Activated naive CD4-positive, alpha-beta T cell treated with anti-CD3 and anti-CD28 coated beads for 36 hours (primary cell): ENCODE measurements at regions of chr6 and their contacts with region 1.

Region 1: DNA sequence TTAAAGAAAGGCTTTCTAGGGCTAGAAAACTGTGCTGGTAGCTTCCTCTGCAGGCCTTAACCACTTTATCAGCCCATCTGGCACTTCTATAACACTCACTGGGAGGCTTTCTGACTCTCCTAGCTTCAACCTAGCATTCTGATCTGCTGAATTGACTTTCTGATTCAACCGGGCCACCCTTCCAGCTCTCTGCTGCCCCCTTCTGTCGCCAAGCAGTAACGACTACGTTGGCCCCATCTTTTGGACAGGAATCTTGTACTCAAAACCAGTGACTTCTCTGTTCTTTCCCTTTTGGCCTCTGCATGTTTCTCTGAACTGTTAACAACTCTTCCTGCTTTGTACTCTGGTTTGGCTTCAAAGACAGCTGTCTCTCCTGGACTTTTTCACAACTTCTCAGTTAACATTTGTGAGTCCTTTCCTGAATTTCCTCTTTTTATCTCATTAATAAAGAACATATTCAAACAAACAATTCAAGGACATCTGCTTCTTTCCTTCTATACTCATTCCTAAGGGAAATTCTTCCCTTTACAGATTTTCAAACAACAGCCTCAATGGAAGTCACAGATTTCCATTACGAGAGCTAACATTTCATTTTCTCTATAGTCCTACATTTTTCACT is 43.9 kb upstream of the FAM135A start:
- DNase-seq: peak; percentile 76
- H3K4me3 Mint-ChIP-seq: no peak overlapping the region
- H3K27ac Mint-ChIP-seq: no peak overlapping the region
- H3K4me1 Mint-ChIP-seq: no peaks in the 10 kb centered on the region
- H3K27me3 Mint-ChIP-seq: peaks cover 9% of the 10 kb centered on the region

Region 2: GRCh38 chr6:70221025-70221714 is 148.3 kb before region 1 on chr6:
- CTCF ChIA-PET with region 1: interaction called, 95 read pairs
- intact Hi-C with region 1: loop called (anchors 1 kb)
- DNase-seq: no peak
- H3K4me3 Mint-ChIP-seq: no peak overlapping the region
- H3K27ac Mint-ChIP-seq: no peak overlapping the region
- H3K4me1 Mint-ChIP-seq: no peaks in the 10 kb centered on the region
- H3K27me3 Mint-ChIP-seq: peaks cover 13% of the 10 kb centered on the region

Region 3: DNA sequence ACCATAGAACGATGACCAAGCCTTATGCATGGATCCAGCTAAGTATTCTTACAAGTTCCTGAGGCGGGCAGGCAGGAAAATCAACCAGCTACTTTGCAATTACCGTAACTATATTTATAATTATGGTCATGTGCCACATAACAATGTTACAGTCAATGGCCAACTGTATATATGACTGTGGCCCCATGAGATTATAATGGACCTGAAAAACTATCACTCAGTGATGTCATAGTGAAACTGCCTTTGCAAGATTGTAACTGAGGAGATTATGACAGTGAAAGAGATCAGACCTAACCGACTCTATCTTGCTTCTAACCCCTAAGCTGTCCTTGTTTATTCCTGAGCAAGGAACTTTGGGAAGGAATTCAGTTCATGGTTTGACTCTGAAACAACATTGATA is 10.8 kb after region 1 on chr6:
- CTCF ChIA-PET with region 1: interaction called, 20 read pairs
- intact Hi-C with region 1: no loop called
- DNase-seq: no peak
- H3K4me3 Mint-ChIP-seq: no peak overlapping the region
- H3K27ac Mint-ChIP-seq: no peak overlapping the region
- H3K4me1 Mint-ChIP-seq: no peaks in the 10 kb centered on the region
- H3K27me3 Mint-ChIP-seq: peaks cover 12% of the 10 kb centered on the region

Region 4: DNA sequence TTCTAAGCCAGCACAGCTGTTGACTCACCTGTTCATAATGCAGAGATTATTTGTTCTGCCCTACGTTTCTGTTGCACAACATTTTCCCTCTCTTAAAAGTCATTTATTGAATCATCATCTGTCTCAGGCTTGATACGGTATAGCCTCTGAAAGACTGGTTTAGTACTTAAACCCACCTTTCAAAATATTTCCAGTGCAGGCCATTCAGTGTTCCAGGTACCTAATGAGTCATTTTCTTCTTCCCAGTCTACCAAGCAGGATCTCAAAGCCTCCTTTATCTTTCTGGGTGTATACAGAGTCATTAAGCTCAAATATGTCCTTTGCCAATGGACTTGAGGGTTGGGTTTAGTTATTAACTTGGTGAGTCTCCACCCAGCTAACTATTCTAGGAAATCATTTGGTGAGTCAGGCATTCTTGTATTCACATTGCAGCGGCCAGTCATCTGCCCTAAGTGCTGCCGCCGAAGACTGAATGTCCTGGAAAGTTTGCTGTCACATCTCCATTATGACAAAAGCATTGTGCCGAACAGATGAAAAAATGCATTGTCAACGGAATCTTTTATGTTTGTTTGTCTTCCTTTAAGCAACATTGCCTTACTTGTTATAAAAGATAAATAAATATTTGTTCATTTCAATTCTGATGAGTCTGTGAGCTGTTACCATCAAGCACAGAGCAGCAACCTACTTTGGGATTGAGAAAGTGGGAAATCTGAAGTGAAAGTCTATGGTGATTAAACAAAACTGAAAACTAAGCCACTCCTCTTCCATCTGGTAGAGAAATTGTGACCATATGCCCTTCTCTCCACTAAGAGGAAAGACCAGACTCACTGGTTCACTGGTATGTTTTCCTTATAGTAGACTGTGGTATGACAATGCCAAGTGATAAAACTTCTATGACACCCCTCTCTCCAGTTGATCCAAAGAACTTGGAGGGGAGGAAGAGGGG is 29.6 kb after region 1 on chr6:
- CTCF ChIA-PET with region 1: no interaction called
- intact Hi-C with region 1: no loop called
- DNase-seq: no peak
- H3K4me3 Mint-ChIP-seq: no peak overlapping the region
- H3K27ac Mint-ChIP-seq: no peak overlapping the region
- H3K4me1 Mint-ChIP-seq: no peaks in the 10 kb centered on the region
- H3K27me3 Mint-ChIP-seq: peaks cover 16% of the 10 kb centered on the region

Region 5: DNA sequence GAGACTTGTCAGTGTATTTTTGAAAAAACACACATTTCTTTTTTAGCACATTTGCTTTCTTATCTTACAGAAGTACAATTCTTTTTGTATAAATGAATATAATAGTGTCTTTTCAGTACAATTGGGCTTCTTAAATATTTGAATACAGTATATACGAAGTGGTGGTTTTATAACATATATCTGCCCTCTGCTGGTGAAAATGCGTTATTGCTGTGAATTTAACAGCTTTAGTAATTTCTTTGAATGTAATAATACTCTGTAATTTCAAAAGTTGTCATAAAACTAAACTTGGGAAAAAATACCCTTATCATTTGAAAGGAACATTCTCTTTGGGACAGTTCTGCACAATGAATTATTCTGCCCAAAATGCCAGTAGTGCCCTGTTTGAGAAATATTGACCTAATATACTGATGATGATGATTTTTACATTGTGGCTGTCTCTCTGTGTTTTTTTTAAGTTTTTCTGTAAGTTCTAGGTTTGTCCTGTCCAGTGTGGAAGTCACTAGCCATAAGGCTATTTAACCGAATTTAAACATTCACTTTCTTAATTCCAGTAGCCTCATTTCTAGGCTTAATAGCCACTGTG is 317.2 kb after region 1 on chr6:
- CTCF ChIA-PET with region 1: interaction called, 12 read pairs
- intact Hi-C with region 1: loop called (anchors 1 kb)
- DNase-seq: no peak
- H3K4me3 Mint-ChIP-seq: no peak overlapping the region
- H3K27ac Mint-ChIP-seq: no peak overlapping the region
- H3K4me1 Mint-ChIP-seq: peaks cover 44% of the 10 kb centered on the region
- H3K27me3 Mint-ChIP-seq: no peaks in the 10 kb centered on the region

Region 6: DNA sequence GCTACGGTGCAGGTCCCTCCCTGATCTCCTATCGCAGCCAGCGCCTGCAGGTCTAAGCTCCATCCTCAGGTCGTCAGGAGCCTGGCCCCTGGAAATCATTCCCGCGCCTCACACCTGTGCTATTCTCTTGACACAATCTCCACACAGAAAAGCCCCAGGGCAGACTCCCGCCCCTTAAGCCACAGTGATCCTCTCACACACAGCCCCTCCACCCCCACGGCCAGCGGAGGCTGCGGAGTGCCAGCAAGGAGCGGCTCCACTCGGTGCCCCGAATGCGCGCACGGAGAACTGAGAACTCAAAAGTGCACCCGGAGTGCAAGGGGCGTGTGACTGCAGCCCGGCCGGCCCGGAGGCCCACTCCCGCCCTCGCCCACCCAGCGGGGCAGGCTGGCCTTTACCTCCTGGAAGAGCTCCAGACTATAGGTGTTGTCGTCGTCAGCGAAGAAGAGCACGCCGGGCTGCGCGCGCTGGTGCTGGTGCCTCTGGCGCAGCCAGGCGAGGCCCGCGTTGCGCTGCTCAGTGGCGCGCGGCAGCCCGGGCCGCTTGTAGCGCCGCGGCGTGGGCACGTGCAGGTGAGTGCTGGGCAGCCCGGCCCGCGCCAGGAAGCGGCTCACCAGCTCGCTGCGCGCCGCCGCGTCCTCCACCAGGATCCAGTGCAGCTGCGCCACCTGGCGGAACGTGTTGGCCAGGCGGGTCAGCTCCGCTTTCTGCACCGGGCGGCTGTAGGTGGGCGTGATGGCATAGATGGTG is 586.2 kb after region 1 on chr6:
- CTCF ChIA-PET with region 1: no interaction called
- intact Hi-C with region 1: loop called (anchors 2 kb)
- DNase-seq: peak; percentile 93
- H3K4me3 Mint-ChIP-seq: peak overlapping the region; percentile 74
- H3K27ac Mint-ChIP-seq: no peak overlapping the region
- H3K4me1 Mint-ChIP-seq: peaks cover 4% of the 10 kb centered on the region
- H3K27me3 Mint-ChIP-seq: peaks cover 49% of the 10 kb centered on the region